B cell (primary cell): ENCODE measurements at regions of chr6 and their contacts with region 1.

Region 1: GRCh38 chr6:31546962-31547726 is at the start of gene NFKBIL1:
- DNase-seq: peak; percentile 96
- ATAC-seq: peak; percentile 84
- H3K4me3 ChIP-seq: peak within 1 kb of the TSS; percentile 40 to 69 (median 56)
- H3K4me3 Mint-ChIP-seq: peak within 1 kb of the TSS; percentile 87
- H3K27ac ChIP-seq: peak within 1 kb of the TSS; percentile 80 to 83
- H3K27ac Mint-ChIP-seq: peak within 1 kb of the TSS; percentile 88
- H3K4me1 ChIP-seq: peaks cover 30 to 53% of the 10 kb centered on the region in 2 donors
- H3K4me1 Mint-ChIP-seq: peaks cover 48% of the 10 kb centered on the region
- H3K27me3 ChIP-seq: no peaks in the 10 kb centered on the region
- H3K27me3 Mint-ChIP-seq: no peaks in the 10 kb centered on the region
- CTCF ChIP-seq: peak; percentile 50
- total RNA-seq, gene NFKBIL1: 17.8 and 18.4 TPM in 2 replicates

Region 2: DNA sequence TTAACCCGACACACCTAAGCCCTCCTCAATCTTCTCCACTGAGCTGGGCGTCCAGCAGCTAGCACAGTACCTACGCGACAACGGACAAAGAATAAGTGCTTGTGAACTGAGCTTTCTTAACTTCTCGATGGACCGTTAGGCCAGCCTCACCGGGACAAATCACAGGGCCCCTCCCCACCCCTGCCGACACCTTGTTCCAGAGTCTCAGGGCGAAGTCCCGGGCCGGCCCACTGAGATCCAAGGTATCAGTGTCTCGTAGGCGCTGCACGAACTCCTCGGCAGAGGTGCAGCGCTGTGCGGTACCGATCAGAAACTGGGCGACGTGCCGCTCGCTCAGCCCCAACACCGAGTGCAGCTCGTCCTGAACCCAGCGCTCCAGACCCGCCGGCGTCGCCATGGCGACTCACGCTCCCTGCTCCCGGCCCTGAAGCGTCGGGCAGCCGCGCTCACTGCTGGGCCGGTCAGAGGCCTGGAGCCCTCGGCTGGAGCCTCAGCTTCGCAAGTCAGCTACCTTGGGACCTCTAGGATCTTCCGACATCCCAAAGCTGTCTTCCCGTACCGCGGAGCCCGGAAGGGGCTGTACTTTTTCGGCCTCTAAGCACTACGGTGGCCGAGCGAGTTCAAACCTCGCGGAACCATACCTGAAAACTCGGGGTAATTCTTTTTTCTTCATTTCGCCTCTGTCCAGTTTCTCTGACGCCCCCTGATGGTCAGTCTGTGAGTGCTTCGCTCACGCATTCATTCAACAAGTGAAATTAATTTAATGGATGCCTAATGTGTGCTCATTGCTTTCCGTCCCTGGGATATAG is 874.5 kb before region 1 on chr6 and contains the start of gene DHX16:
- CTCF ChIA-PET with region 1: no interaction called
- POLR2A ChIA-PET with region 1: no interaction called
- intact Hi-C with region 1: no loop called
- DNase-seq: peak; percentile 97
- ATAC-seq: peak; percentile 88
- H3K4me3 ChIP-seq: peak within 1 kb of the TSS; percentile 85 to 100 (median 98)
- H3K4me3 Mint-ChIP-seq: peak within 1 kb of the TSS; percentile 84
- H3K27ac ChIP-seq: peak within 1 kb of the TSS; percentile 54 to 75
- H3K27ac Mint-ChIP-seq: peak within 1 kb of the TSS; percentile 87
- H3K4me1 ChIP-seq: peaks cover 10 to 19% of the 10 kb centered on the region in 2 donors
- H3K4me1 Mint-ChIP-seq: peaks cover 29% of the 10 kb centered on the region
- H3K27me3 ChIP-seq: no peaks in the 10 kb centered on the region
- H3K27me3 Mint-ChIP-seq: no peaks in the 10 kb centered on the region
- CTCF ChIP-seq: peak; percentile 79
- total RNA-seq, gene DHX16: 51.1 and 58.3 TPM in 2 replicates

Region 3: GRCh38 chr6:31493875-31494694 is 53.1 kb before region 1 on chr6:
- CTCF ChIA-PET with region 1: interaction called, 33 read pairs
- POLR2A ChIA-PET with region 1: interaction called, 10 read pairs
- intact Hi-C with region 1: no loop called
- DNase-seq: peak; percentile 89
- ATAC-seq: peak; percentile 47
- H3K4me3 ChIP-seq: peak overlapping the region; percentile 76 to 91 (median 85)
- H3K4me3 Mint-ChIP-seq: peak overlapping the region; percentile 83
- H3K27ac ChIP-seq: peak overlapping the region; percentile 74 to 80
- H3K27ac Mint-ChIP-seq: peak overlapping the region; percentile 89
- H3K4me1 ChIP-seq: peaks cover 42 to 54% of the 10 kb centered on the region in 2 donors
- H3K4me1 Mint-ChIP-seq: peaks cover 46% of the 10 kb centered on the region
- H3K27me3 ChIP-seq: no peaks in the 10 kb centered on the region
- H3K27me3 Mint-ChIP-seq: no peaks in the 10 kb centered on the region
- CTCF ChIP-seq: peak; percentile 88

Region 4: GRCh38 chr6:31568537-31568961 is 21.4 kb after region 1 on chr6:
- CTCF ChIA-PET with region 1: interaction called, 2,241 read pairs
- POLR2A ChIA-PET with region 1: interaction called, 1,450 read pairs
- intact Hi-C with region 1: no loop called
- DNase-seq: peak; percentile 94
- ATAC-seq: peak; percentile 70
- H3K4me3 ChIP-seq: peak overlapping the region in 1 of 5 experiments; percentile 19
- H3K4me3 Mint-ChIP-seq: peak overlapping the region; percentile 63
- H3K27ac ChIP-seq: peak overlapping the region; percentile 78 to 94
- H3K27ac Mint-ChIP-seq: peak overlapping the region; percentile 89
- H3K4me1 ChIP-seq: peaks cover 62 to 68% of the 10 kb centered on the region in 2 donors
- H3K4me1 Mint-ChIP-seq: peaks cover 75% of the 10 kb centered on the region
- H3K27me3 ChIP-seq: no peaks in the 10 kb centered on the region
- H3K27me3 Mint-ChIP-seq: no peaks in the 10 kb centered on the region
- CTCF ChIP-seq: no peak

Region 5: DNA sequence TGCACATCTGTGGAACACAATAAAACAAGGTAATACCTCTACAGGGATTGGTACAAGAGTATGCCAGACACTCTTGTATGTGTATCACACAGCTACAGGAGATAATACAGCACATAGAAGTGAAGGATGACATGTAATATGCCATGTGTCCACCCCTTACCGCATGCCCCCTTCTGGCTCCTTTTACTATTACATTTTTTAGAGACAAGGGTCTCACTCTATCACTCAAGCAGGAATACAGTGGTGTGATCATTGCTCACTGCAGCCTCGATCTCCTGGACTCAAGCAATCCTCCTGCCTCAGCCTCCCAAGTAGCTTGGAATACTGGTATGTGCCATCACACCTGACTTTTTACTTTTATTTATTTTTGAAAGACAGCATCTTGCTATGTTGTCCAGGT is 49.9 kb after region 1 on chr6:
- CTCF ChIA-PET with region 1: interaction called, 2,241 read pairs
- POLR2A ChIA-PET with region 1: interaction called, 1,450 read pairs
- intact Hi-C with region 1: loop called (anchors 1 kb)
- DNase-seq: peak; percentile 86
- ATAC-seq: peak; percentile 68
- H3K4me3 ChIP-seq: no peak overlapping the region
- H3K4me3 Mint-ChIP-seq: peak overlapping the region; percentile 35
- H3K27ac ChIP-seq: peak overlapping the region in 1 of 2 donors; percentile 27
- H3K27ac Mint-ChIP-seq: peak overlapping the region; percentile 75
- H3K4me1 ChIP-seq: peaks cover 49 to 61% of the 10 kb centered on the region in 2 donors
- H3K4me1 Mint-ChIP-seq: peaks cover 52% of the 10 kb centered on the region
- H3K27me3 ChIP-seq: no peaks in the 10 kb centered on the region
- H3K27me3 Mint-ChIP-seq: no peaks in the 10 kb centered on the region
- CTCF ChIP-seq: peak; percentile 80

Region 6: GRCh38 chr6:31680840-31681671 is 133.9 kb after region 1 on chr6 and contains the start of gene LY6G5C:
- CTCF ChIA-PET with region 1: interaction called, 11 read pairs
- POLR2A ChIA-PET with region 1: no interaction called
- intact Hi-C with region 1: no loop called
- DNase-seq: peak; percentile 79
- ATAC-seq: peak; percentile 78
- H3K4me3 ChIP-seq: peak within 1 kb of the TSS; percentile 44 to 69 (median 53)
- H3K4me3 Mint-ChIP-seq: peak within 1 kb of the TSS; percentile 88
- H3K27ac ChIP-seq: peak within 1 kb of the TSS in 1 of 2 donors; percentile 50
- H3K27ac Mint-ChIP-seq: peak within 1 kb of the TSS; percentile 57
- H3K4me1 ChIP-seq: peaks cover 19 to 40% of the 10 kb centered on the region in 2 donors
- H3K4me1 Mint-ChIP-seq: peaks cover 43% of the 10 kb centered on the region
- H3K27me3 ChIP-seq: no peaks in the 10 kb centered on the region
- H3K27me3 Mint-ChIP-seq: no peaks in the 10 kb centered on the region
- CTCF ChIP-seq: peak; percentile 55
- total RNA-seq, gene LY6G5C: 0.76 and 2.1 TPM in 2 replicates

Region 7: GRCh38 chr6:32153564-32154513 is 606.7 kb after region 1 on chr6 and contains the start of gene PPT2:
- CTCF ChIA-PET with region 1: no interaction called
- POLR2A ChIA-PET with region 1: no interaction called
- intact Hi-C with region 1: loop called (anchors 2 kb)
- DNase-seq: peak; percentile 65
- ATAC-seq: peak; percentile 32
- H3K4me3 ChIP-seq: peak within 1 kb of the TSS; percentile 59 to 75 (median 68)
- H3K4me3 Mint-ChIP-seq: peak within 1 kb of the TSS; percentile 99
- H3K27ac ChIP-seq: no peak within 1 kb of the TSS
- H3K27ac Mint-ChIP-seq: peak within 1 kb of the TSS; percentile 58
- H3K4me1 ChIP-seq: peaks cover 27 to 34% of the 10 kb centered on the region in 2 donors
- H3K4me1 Mint-ChIP-seq: peaks cover 48% of the 10 kb centered on the region
- H3K27me3 ChIP-seq: peaks cover 0 to 54% (median 19%) of the 10 kb centered on the region in 4 experiments
- H3K27me3 Mint-ChIP-seq: peaks cover 35% of the 10 kb centered on the region
- CTCF ChIP-seq: no peak
- total RNA-seq, gene PPT2: 2.7 and 4.2 TPM in 2 replicates